ENCODE measurements at regions of chr3 and their contacts with region 1.

Region 1: GRCh38 chr3:134473868-134474546 is 11.8 kb downstream of the ANAPC13 start:
- DNase-seq: peak; percentile 69 to 81 (median 74)
- H3K4me3 ChIP-seq: no peak overlapping the region
- H3K27ac ChIP-seq: no peak overlapping the region
- H3K4me1 ChIP-seq: no peaks in the 10 kb centered on the region
- H3K27me3 ChIP-seq: no peaks in the 10 kb centered on the region

Region 2: DNA sequence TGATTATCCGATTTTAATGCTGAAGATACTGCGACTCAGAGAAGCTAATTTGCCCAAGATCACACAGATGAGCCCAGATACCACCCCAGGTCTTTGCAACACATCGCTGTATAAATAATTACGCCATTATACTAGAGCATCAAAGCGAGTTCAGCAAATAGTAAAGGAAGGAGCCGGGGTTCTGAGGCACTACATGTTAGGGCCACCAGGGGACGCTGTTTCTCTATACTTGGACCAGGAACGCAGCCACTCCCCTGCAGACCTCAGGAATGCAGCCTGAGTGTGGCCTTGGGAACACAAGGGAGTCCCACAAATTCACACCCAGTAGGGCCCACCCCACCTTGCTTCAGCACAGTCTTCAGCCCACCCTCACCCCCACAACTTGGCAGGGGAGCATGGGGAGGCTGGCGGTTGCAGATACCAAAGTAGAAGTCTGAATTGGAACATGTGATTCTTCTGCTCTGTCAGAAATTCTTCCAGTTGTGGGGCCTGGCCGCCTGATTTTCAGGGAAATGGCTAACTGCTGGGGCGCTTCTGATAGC is 165.6 kb before region 1 on chr3:
- CTCF ChIA-PET with region 1: interaction called, 244 read pairs
- POLR2A ChIA-PET with region 1: no interaction called
- DNase-seq: peak; percentile 73 to 82 (median 74)
- H3K4me3 ChIP-seq: peak overlapping the region in 1 of 7 experiments; percentile 35
- H3K27ac ChIP-seq: no peak overlapping the region
- H3K4me1 ChIP-seq: peaks cover 0 to 9% (median 6%) of the 10 kb centered on the region in 4 experiments
- H3K27me3 ChIP-seq: peaks cover 0 to 32% (median 18%) of the 10 kb centered on the region in 5 experiments

Region 3: GRCh38 chr3:134357261-134358184 is 116.5 kb before region 1 on chr3:
- CTCF ChIA-PET with region 1: interaction called, 11 read pairs
- POLR2A ChIA-PET with region 1: no interaction called
- DNase-seq: no peak
- H3K4me3 ChIP-seq: no peak overlapping the region
- H3K27ac ChIP-seq: no peak overlapping the region
- H3K4me1 ChIP-seq: no peaks in the 10 kb centered on the region
- H3K27me3 ChIP-seq: no peaks in the 10 kb centered on the region

Region 4: DNA sequence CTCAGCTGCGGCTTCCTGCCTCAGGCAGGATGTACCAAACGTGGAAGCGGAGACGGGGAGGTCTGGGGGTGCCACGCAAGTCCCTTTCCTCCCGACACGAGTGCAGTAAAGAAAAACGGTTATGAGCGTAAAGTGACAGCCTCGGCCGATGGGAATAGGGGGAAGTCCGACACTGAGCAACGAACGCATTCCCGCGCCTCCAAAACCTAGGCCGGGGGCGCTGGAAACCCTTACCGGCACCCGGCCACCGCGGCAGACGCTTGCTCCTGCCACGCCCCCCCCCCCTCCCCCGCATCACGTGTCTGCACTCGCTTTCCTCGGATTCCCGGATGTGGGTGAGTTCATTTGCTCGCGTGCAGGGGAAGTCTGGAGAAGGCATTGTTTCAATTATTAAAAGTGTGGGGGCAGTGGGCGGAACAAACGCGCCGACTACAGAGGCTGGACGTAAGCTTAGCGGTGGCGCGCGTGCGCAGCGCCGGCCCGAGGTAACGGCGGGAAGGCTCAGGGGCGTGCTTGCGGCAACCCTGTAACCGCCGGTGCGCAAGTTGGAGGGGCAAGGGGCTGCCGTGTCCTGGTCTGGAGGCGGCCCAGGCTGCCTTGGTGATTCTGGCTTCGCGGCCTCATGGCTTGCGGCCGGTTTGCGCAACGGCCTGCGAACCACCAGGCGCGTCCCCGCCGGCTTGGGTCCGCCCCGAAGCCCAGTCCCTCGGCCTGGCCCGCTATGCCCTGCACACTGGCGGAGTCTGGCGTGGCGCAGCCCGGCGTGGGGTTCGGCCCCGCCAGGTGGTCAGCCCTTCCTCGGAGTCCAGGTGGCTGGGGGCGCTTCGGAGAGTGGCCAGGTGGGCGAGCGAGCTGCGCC is 11.9 kb after region 1 on chr3 and contains the starts of genes ANAPC13 and CEP63:
- CTCF ChIA-PET with region 1: interaction called, 34 read pairs
- POLR2A ChIA-PET with region 1: no interaction called
- DNase-seq: peak; percentile 99 to 100 (median 100)
- H3K4me3 ChIP-seq: peak within 1 kb of the TSS; percentile 72 to 95 (median 91)
- H3K27ac ChIP-seq: peak within 1 kb of the TSS; percentile 90 to 95
- H3K4me1 ChIP-seq: peaks cover 37 to 47% (median 40%) of the 10 kb centered on the region in 4 experiments
- H3K27me3 ChIP-seq: no peaks in the 10 kb centered on the region

Region 5: GRCh38 chr3:134511500-134511899 is 37.5 kb after region 1 on chr3:
- CTCF ChIA-PET with region 1: no interaction called
- POLR2A ChIA-PET with region 1: no interaction called
- DNase-seq: no peak
- H3K4me3 ChIP-seq: no peak overlapping the region
- H3K27ac ChIP-seq: no peak overlapping the region
- H3K4me1 ChIP-seq: no peaks in the 10 kb centered on the region
- H3K27me3 ChIP-seq: no peaks in the 10 kb centered on the region

Measured in common myeloid progenitor, CD34-positive (primary cell).